Ascending aorta (tissue), 2 donors: ENCODE measurements at regions of chr12 and their contacts with region 1.

Region 1: GRCh38 chr12:93825931-93826555 is 148.9 kb downstream of the CRADD start:
- DNase-seq: no peak
- H3K4me3 ChIP-seq: no peak overlapping the region
- H3K27ac ChIP-seq: peak overlapping the region; percentile 43 to 64
- H3K4me1 ChIP-seq: peaks cover 0 to 16% of the 10 kb centered on the region in 2 donors
- H3K27me3 ChIP-seq: no peaks in the 10 kb centered on the region
- CTCF ChIP-seq: no peak

Region 2: DNA sequence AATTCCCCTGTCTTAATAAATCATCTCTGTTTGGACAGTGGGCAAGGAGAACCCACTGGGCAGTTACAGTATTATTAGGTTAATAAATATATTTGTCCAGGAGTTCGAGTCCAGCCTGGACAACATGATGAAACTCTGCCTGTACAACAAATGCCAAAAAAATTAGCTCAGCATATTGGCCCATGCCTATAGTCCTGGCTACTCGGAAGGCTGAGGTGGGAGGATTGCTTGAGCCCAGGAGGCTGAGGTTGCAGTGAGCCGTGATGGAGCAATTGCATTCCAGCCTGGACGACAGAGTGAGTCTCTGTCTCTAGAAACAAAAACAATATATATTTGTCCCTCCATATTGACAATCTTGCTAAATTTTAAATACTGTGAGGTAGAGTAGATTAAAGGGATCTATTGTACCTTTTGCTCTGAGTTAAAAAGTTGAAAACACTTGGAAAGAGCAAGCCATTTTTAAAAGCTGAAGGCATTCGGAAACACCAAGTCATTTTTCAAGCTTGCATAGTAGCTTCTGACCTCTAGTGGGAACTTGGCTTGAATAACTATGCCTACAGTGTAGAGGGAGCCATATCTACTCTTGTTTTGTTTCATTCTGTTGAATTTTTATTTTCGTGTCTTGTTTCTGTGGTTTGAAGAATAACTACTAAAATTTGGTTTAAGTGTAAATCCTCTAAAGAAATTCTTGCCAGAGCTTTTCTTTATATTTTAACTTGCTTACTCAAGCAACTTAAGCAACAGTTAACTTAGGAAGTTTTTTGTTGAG is 882.4 kb before region 1 on chr12:
- intact Hi-C with region 1: no loop called
- DNase-seq: no peak
- H3K4me3 ChIP-seq: no peak overlapping the region
- H3K27ac ChIP-seq: no peak overlapping the region
- H3K4me1 ChIP-seq: no peaks in the 10 kb centered on the region
- H3K27me3 ChIP-seq: no peaks in the 10 kb centered on the region
- CTCF ChIP-seq: peak in 1 of 3 experiments; percentile 23

Region 3: GRCh38 chr12:93972411-93973208 is 146.6 kb after region 1 on chr12:
- intact Hi-C with region 1: loop called (anchors 5 kb)
- DNase-seq: peak in 1 of 2 donors; percentile 67
- H3K4me3 ChIP-seq: peak overlapping the region in 1 of 2 donors; percentile 4
- H3K27ac ChIP-seq: peak overlapping the region; percentile 79 to 84
- H3K4me1 ChIP-seq: peaks cover 4 to 21% of the 10 kb centered on the region in 2 donors
- H3K27me3 ChIP-seq: no peaks in the 10 kb centered on the region
- CTCF ChIP-seq: no peak